GM12878 (cell line): ENCODE measurements at regions of chr7 and their contacts with region 1.

Region 1: DNA sequence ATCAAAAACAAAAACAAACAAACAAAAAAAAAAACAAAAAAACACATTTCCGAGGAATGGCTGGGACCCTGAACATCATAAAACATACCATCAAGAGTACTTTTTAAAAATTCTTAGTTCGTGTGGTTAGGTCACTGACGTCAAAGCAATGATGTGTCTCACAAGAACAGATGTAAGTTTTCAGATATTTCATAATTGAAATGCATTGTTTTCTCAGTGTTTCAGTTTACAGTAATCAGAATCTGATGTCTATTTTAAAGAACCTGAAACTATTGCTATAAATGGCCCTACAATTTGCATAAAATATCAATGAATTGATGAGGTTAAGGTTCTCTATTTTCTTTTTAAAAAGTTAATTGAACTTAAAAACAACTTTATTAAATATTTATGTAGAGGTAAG is 103.7 kb upstream of the HGF start:
- DNase-seq: peak; percentile 31
- ATAC-seq: peak; percentile 75
- H3K4me3 ChIP-seq: no peak overlapping the region
- H3K27ac ChIP-seq: peak overlapping the region; percentile 84
- H3K4me1 ChIP-seq: peaks cover 9% of the 10 kb centered on the region
- H3K27me3 ChIP-seq: no peaks in the 10 kb centered on the region
- CTCF ChIP-seq: no peak
- EP300 ChIP-seq: peak; percentile 57 to 66; a peak in 2 of 4 replicates
- POLR2A ChIP-seq: no peak
- RAD21 ChIP-seq: no peak

Region 2: GRCh38 chr7:81769891-81770727 is 103.5 kb before region 1 on chr7 and contains the start of gene HGF:
- CTCF ChIA-PET with region 1: no interaction called
- POLR2A ChIA-PET with region 1: no interaction called
- RAD21 ChIA-PET with region 1: no interaction called
- SMC1A ChIA-PET with region 1: no interaction called
- in situ Hi-C with region 1: no loop called
- intact Hi-C with region 1: loop called (anchors 2 kb)
- DNase-seq: no peak
- ATAC-seq: peak; percentile 67
- H3K4me3 ChIP-seq: peak within 1 kb of the TSS; percentile 43
- H3K27ac ChIP-seq: no peak within 1 kb of the TSS
- H3K4me1 ChIP-seq: no peaks in the 10 kb centered on the region; the same call in 1 of the 2 replicates
- H3K27me3 ChIP-seq: peaks cover 0 to 3% of the 10 kb centered on the region in 2 experiments; a peak in 1 of 4 replicates
- CTCF ChIP-seq: no peak
- EP300 ChIP-seq: no peak
- POLR2A ChIP-seq: no peak
- RAD21 ChIP-seq: no peak
- polyA plus RNA-seq, gene HGF: 1.4 to 1.7 TPM

Region 3: DNA sequence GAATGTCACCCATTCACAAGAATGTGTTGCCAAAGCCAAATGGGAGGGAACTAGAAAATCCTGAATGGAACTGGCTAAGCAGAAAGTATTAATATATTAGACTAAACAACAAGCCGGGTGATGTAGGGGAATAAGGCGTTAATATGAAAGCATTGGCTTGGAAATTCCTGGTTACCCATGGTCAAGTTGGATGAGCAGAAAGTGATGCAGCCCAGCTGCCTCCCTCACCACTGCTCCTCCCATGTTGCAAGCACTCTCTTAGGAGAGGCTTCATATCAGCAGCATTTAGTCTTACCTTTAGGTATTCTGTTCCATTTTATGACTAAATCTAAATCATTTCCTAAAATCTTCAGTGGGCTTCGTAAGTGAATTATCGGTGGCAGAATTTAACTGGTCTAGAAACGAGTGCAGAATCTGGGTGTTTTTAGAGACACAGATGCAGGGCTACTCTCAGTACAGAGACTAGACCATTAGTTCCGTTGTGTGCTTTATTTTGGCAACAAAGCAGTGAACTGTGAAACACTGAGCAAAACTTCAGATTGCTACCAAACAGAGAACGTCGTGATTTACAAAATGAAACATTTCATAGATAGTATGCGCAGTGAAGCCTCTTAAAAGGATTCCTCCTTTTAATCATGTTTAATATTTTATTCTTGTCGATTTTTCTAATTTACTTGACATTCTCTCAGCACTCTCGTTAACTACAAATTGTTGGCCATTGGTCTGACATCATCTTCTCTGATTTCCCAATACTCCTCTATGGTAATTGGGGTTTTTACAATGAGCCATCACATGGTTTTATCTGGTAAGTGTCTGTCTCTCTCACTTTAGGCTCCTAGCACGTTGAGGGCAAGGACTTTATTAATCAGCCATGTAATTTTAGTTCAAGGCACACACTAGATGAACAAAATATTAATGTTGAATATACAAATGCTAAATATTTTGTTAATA is 81.7 kb before region 1 on chr7:
- CTCF ChIA-PET with region 1: no interaction called
- POLR2A ChIA-PET with region 1: no interaction called
- RAD21 ChIA-PET with region 1: no interaction called
- SMC1A ChIA-PET with region 1: no interaction called
- in situ Hi-C with region 1: no loop called
- intact Hi-C with region 1: loop called (anchors 5 kb)
- DNase-seq: no peak
- ATAC-seq: peak; percentile 88
- H3K4me3 ChIP-seq: no peak overlapping the region
- H3K27ac ChIP-seq: no peak overlapping the region
- H3K4me1 ChIP-seq: no peaks in the 10 kb centered on the region
- H3K27me3 ChIP-seq: no peaks in the 10 kb centered on the region
- CTCF ChIP-seq: no peak
- EP300 ChIP-seq: no peak
- POLR2A ChIP-seq: no peak
- RAD21 ChIP-seq: no peak